ENCODE measurements at regions of chr14 and their contacts with region 1.

Region 1: GRCh38 chr14:49633640-49634546 is 1.2 kb downstream of the DNAAF2 start:
- DNase-seq: peak; percentile 88 to 97 (median 94)
- ATAC-seq: peak; percentile 84
- H3K4me3 ChIP-seq: peak overlapping the region; percentile 74 to 92
- H3K4me3 Mint-ChIP-seq: peak overlapping the region; percentile 92
- H3K27ac ChIP-seq: peak overlapping the region; percentile 95
- H3K27ac Mint-ChIP-seq: peak overlapping the region; percentile 93
- H3K4me1 ChIP-seq: peaks cover 27% of the 10 kb centered on the region
- H3K4me1 Mint-ChIP-seq: peaks cover 62% of the 10 kb centered on the region
- H3K27me3 ChIP-seq: no peaks in the 10 kb centered on the region
- H3K27me3 Mint-ChIP-seq: no peaks in the 10 kb centered on the region
- CTCF ChIP-seq: peak; percentile 72

Region 2: GRCh38 chr14:49538926-49539325 is 95.0 kb before region 1 on chr14:
- CTCF ChIA-PET with region 1: no interaction called
- POLR2A ChIA-PET with region 1: no interaction called
- intact Hi-C with region 1: no loop called
- DNase-seq: no peak
- ATAC-seq: no peak
- H3K4me3 ChIP-seq: no peak overlapping the region
- H3K4me3 Mint-ChIP-seq: no peak overlapping the region
- H3K27ac ChIP-seq: no peak overlapping the region
- H3K27ac Mint-ChIP-seq: no peak overlapping the region
- H3K4me1 ChIP-seq: no peaks in the 10 kb centered on the region
- H3K4me1 Mint-ChIP-seq: no peaks in the 10 kb centered on the region
- H3K27me3 ChIP-seq: no peaks in the 10 kb centered on the region
- H3K27me3 Mint-ChIP-seq: no peaks in the 10 kb centered on the region
- CTCF ChIP-seq: no peak

Region 3: GRCh38 chr14:49585803-49586672 is 47.9 kb before region 1 on chr14 and contains the start of gene RPS29:
- CTCF ChIA-PET with region 1: interaction called, 5 read pairs
- POLR2A ChIA-PET with region 1: interaction called, 41 read pairs
- intact Hi-C with region 1: loop called in 1 of 2 experiments (anchors 1 kb)
- DNase-seq: peak; percentile 97 to 100 (median 98)
- ATAC-seq: peak; percentile 82
- H3K4me3 ChIP-seq: peak within 1 kb of the TSS; percentile 81 to 98
- H3K4me3 Mint-ChIP-seq: peak within 1 kb of the TSS; percentile 91
- H3K27ac ChIP-seq: peak within 1 kb of the TSS; percentile 97 to 98
- H3K27ac Mint-ChIP-seq: peak within 1 kb of the TSS; percentile 98
- H3K4me1 ChIP-seq: peaks cover 33% of the 10 kb centered on the region
- H3K4me1 Mint-ChIP-seq: peaks cover 48% of the 10 kb centered on the region
- H3K27me3 ChIP-seq: no peaks in the 10 kb centered on the region
- H3K27me3 Mint-ChIP-seq: no peaks in the 10 kb centered on the region
- CTCF ChIP-seq: no peak
- total RNA-seq, gene RPS29: 3,843 to 3,876 TPM

Region 4: DNA sequence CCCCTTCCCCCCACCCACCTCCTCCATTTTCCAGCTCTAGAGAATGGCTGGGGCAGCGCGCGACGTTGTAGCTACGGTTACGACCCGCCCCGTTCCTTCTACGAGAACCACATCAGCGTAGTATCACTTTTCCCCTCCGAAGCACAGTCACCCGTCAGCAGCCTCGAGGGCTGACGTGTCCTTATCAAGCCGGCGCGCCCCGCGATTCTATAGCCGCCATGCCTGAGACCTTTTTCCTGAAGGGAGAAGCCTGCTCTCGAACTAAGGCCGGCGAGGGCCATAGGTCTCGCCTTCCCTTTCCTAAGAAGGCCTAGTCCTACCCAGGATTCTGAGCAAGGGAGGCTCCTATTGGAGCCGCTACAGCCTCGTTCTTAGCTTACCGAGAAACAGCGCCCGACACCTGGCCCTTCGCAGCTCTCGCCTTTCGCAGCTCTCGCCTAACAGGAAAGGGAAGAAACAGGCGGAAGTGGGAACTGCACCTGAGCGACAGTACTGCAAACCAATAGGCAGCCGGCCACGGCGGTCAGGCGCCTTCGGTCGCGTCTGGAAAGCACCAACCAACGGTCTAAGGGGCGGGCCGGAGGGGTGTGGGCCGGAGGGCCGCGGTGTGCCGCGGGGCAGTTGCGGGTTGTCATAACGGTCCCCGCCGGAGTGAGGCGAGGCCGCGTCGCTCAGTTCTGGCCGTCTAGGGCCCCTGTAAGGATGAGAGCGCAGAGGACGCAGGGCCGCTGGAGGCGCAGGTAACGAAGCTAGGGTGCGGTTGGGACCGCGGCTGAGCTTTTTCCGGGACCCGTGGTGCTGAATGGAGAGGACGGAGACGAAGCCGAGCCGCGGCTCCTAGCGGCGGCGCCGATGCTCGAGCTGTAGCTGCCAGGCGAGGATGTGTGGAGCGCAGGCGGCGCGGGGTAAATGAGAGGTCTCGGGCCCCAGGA is 13.4 kb before region 1 on chr14 and contains the starts of genes MGAT2 and RPL36AL:
- CTCF ChIA-PET with region 1: interaction called, 87 read pairs
- POLR2A ChIA-PET with region 1: interaction called, 130 read pairs
- intact Hi-C with region 1: loop called (anchors 1 kb)
- DNase-seq: peak; percentile 85 to 97 (median 93)
- ATAC-seq: peak; percentile 79
- H3K4me3 ChIP-seq: peak within 1 kb of the TSS; percentile 94 to 95
- H3K4me3 Mint-ChIP-seq: peak within 1 kb of the TSS; percentile 97
- H3K27ac ChIP-seq: peak within 1 kb of the TSS; percentile 98 to 99
- H3K27ac Mint-ChIP-seq: peak within 1 kb of the TSS; percentile 100
- H3K4me1 ChIP-seq: peaks cover 40% of the 10 kb centered on the region
- H3K4me1 Mint-ChIP-seq: peaks cover 62% of the 10 kb centered on the region
- H3K27me3 ChIP-seq: no peaks in the 10 kb centered on the region
- H3K27me3 Mint-ChIP-seq: no peaks in the 10 kb centered on the region
- CTCF ChIP-seq: no peak
- total RNA-seq, gene MGAT2: 22.6 to 24.0 TPM
- total RNA-seq, gene RPL36AL: 302 to 318 TPM

Region 5: DNA sequence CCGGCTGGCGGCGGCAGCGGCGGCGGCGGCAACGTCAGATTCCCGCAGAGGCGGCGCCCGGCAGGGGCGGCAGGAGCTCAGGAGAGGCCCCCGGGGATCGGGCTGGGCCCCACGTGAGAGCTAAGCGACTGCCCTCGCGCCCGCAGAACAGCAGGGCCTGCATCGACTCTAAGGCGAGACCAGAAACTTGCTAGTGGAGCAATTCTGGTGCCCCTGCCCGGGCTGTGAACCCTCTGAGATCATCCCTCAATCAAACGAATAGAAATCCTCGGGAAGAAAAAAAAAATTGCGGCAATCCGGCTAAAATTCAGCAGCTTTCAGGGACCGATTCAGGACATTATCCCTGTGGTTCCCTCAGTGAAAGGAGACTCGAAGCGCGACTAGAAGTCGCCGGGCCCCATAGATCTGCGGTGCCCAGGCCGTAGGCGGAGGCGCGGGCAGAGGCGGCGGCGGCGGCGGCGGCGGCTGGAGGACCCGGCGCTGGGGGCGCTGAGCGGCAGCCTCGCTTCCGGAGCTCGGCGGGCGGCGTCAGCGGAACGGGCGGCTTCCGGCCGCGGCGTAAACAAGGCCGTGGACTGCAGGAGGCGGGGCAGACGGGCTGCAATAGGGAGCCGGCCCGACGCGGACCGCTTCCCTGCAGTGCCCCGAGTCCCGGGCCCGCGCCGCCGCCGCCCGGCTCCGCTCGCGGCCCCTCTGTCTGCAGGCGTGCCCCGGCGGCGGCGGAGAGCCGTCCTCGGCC is 133.8 kb after region 1 on chr14 and contains the start of gene KLHDC2:
- CTCF ChIA-PET with region 1: interaction called, 17 read pairs
- POLR2A ChIA-PET with region 1: interaction called, 73 read pairs
- intact Hi-C with region 1: loop called (anchors 1 kb)
- DNase-seq: peak; percentile 74 to 94 (median 87)
- ATAC-seq: peak; percentile 65
- H3K4me3 ChIP-seq: peak within 1 kb of the TSS; percentile 79 to 99
- H3K4me3 Mint-ChIP-seq: peak within 1 kb of the TSS; percentile 98
- H3K27ac ChIP-seq: peak within 1 kb of the TSS; percentile 94 to 97
- H3K27ac Mint-ChIP-seq: peak within 1 kb of the TSS; percentile 100
- H3K4me1 ChIP-seq: peaks cover 29% of the 10 kb centered on the region
- H3K4me1 Mint-ChIP-seq: peaks cover 38% of the 10 kb centered on the region
- H3K27me3 ChIP-seq: no peaks in the 10 kb centered on the region
- H3K27me3 Mint-ChIP-seq: no peaks in the 10 kb centered on the region
- CTCF ChIP-seq: peak; percentile 22
- total RNA-seq, gene KLHDC2: 121 to 122 TPM

Region 6: DNA sequence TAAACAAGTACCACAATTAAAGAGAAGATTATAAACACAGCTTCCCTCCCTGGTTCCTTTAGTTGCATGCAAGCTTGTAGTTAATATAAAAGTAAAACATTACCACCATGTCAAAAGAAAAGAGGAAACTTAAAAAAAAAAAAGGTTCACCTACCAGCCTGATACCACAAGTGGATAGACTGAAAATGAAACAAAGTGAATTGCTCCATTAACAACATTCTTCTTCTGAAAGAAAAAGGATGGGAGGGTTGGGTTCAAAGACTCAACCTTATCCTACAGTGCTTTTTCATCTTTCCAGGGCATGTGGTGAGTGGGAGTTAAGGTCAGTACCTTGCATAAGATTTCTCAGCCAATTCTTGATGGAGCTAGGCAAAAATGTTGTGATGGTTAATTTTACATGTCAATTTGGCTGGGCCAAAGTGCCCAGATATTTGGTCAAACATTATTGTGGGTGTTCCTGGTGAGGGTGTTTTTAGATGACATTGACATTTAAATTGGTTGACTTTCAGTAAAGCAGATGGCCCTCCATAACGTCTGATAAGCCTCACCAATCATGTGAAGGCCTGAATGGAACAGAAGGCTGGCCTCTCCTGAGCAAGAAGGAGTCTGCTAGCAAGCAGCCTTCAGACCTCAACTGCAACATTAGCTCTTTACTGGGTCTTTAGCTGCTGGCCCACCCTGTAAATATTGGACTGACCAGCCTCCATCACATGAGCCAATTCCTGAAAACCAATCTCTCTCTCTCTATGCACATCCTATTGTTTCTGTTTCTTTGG is 453.6 kb after region 1 on chr14:
- CTCF ChIA-PET with region 1: no interaction called
- POLR2A ChIA-PET with region 1: no interaction called
- intact Hi-C with region 1: no loop called
- DNase-seq: peak in 2 of 9 experiments; percentile 41 to 70
- ATAC-seq: no peak
- H3K4me3 ChIP-seq: peak overlapping the region in 1 of 2 experiments; percentile 8
- H3K4me3 Mint-ChIP-seq: peak overlapping the region; percentile 67
- H3K27ac ChIP-seq: peak overlapping the region in 1 of 2 experiments; percentile 98
- H3K27ac Mint-ChIP-seq: peak overlapping the region; percentile 91
- H3K4me1 ChIP-seq: peaks cover 87% of the 10 kb centered on the region
- H3K4me1 Mint-ChIP-seq: peaks cover 94% of the 10 kb centered on the region
- H3K27me3 ChIP-seq: no peaks in the 10 kb centered on the region
- H3K27me3 Mint-ChIP-seq: no peaks in the 10 kb centered on the region
- CTCF ChIP-seq: no peak

Region 7: DNA sequence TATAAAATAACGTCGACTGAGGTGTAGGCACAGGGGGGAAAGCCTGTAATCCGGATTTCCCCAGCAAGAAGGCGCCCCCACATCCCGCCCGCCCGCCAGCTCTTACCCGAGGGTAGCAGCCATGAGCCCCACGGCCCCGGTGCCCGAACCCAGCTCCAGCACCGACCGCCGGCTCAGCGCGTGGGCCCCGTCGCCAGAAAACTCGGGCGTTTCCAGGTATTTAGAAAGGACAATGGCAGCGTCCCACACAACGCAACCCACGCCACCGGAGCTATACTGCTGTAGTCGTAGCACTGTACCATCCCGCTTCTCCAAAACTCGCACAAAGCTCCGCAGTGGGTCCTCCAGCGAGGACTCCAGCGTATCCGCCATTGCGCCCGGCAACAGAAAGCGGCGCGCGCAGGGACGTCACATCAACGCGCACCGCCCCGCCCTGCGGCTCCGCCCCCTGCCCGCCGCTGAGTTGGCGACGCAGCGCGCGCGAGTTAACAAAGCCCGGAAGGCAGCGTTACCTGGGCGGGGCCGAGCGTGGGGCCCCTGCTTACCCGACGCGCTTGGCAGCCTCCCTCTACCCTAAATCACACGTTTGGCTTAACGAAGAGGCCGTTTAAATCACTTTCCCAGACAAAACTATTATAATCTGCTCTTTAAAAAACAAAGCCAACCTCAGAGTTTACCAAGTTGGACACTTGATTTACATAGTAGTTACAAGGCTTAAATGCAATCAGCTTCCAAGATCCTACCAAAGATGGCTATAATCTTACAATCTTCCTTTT is 482.5 kb after region 1 on chr14 and contains the start of gene VCPKMT:
- CTCF ChIA-PET with region 1: interaction called, 6 read pairs
- POLR2A ChIA-PET with region 1: no interaction called
- intact Hi-C with region 1: loop called (anchors 5 to 10 kb)
- DNase-seq: peak; percentile 91 to 98 (median 96)
- ATAC-seq: peak; percentile 97
- H3K4me3 ChIP-seq: peak within 1 kb of the TSS; percentile 69 to 92
- H3K4me3 Mint-ChIP-seq: peak within 1 kb of the TSS; percentile 98
- H3K27ac ChIP-seq: peak within 1 kb of the TSS; percentile 85 to 86
- H3K27ac Mint-ChIP-seq: peak within 1 kb of the TSS; percentile 99
- H3K4me1 ChIP-seq: peaks cover 20% of the 10 kb centered on the region
- H3K4me1 Mint-ChIP-seq: peaks cover 28% of the 10 kb centered on the region
- H3K27me3 ChIP-seq: no peaks in the 10 kb centered on the region
- H3K27me3 Mint-ChIP-seq: no peaks in the 10 kb centered on the region
- CTCF ChIP-seq: no peak
- total RNA-seq, gene VCPKMT: 38.2 to 39.6 TPM

Measured in CD8-positive, alpha-beta T cell (primary cell).